ENCODE measurements at regions of chr16 and their contacts with region 1.

Region 1: GRCh38 chr16:30378236-30379204 is 3.8 kb downstream of the SEPTIN1 start:
- DNase-seq: peak; percentile 99
- H3K4me3 Mint-ChIP-seq: peak overlapping the region; percentile 99
- H3K27ac Mint-ChIP-seq: peak overlapping the region; percentile 100
- H3K4me1 Mint-ChIP-seq: peaks cover 43% of the 10 kb centered on the region
- H3K27me3 Mint-ChIP-seq: no peaks in the 10 kb centered on the region

Region 2: GRCh38 chr16:30361180-30361579 is 17.3 kb before region 1 on chr16:
- intact Hi-C with region 1: no loop called
- DNase-seq: no peak
- H3K4me3 Mint-ChIP-seq: no peak overlapping the region
- H3K27ac Mint-ChIP-seq: peak overlapping the region; percentile 72
- H3K4me1 Mint-ChIP-seq: peaks cover 26% of the 10 kb centered on the region
- H3K27me3 Mint-ChIP-seq: no peaks in the 10 kb centered on the region

Region 3: GRCh38 chr16:30395155-30395991 is 16.9 kb after region 1 on chr16 and contains the start of gene ZNF48:
- intact Hi-C with region 1: loop called (anchors 1 kb)
- DNase-seq: peak; percentile 90
- H3K4me3 Mint-ChIP-seq: peak within 1 kb of the TSS; percentile 96
- H3K27ac Mint-ChIP-seq: peak within 1 kb of the TSS; percentile 86
- H3K4me1 Mint-ChIP-seq: peaks cover 32% of the 10 kb centered on the region
- H3K27me3 Mint-ChIP-seq: no peaks in the 10 kb centered on the region
- total RNA-seq, gene ZNF48: 16.5 and 18.3 TPM in 2 replicates